OCI-LY7 (cell line): ENCODE measurements at regions of chr2 and their contacts with region 1.

Region 1: GRCh38 chr2:190069936-190070696 is 7.6 kb upstream of the MSTN start:
- DNase-seq: peak; percentile 74
- H3K4me3 ChIP-seq: no peak overlapping the region
- H3K27ac ChIP-seq: no peak overlapping the region
- H3K4me1 ChIP-seq: no peaks in the 10 kb centered on the region
- CTCF ChIP-seq: peak; percentile 85

Region 2: GRCh38 chr2:189661148-189661956 is 408.8 kb before region 1 on chr2 and contains the start of gene ASNSD1:
- CTCF ChIA-PET with region 1: interaction called, 4 read pairs
- POLR2A ChIA-PET with region 1: interaction called, 4 read pairs
- intact Hi-C with region 1: loop called (anchors 1 kb)
- DNase-seq: peak; percentile 100
- H3K4me3 ChIP-seq: peak within 1 kb of the TSS; percentile 90
- H3K27ac ChIP-seq: peak within 1 kb of the TSS; percentile 38
- H3K4me1 ChIP-seq: peaks cover 41% of the 10 kb centered on the region
- CTCF ChIP-seq: peak; percentile 99
- total RNA-seq, gene ASNSD1: 36.3 and 36.8 TPM in 2 replicates

Region 3: GRCh38 chr2:189751080-189751658 is 318.9 kb before region 1 on chr2:
- CTCF ChIA-PET with region 1: no interaction called
- POLR2A ChIA-PET with region 1: interaction called, 3 read pairs
- intact Hi-C with region 1: loop called (anchors 1 kb)
- DNase-seq: peak; percentile 64
- H3K4me3 ChIP-seq: no peak overlapping the region
- H3K27ac ChIP-seq: no peak overlapping the region
- H3K4me1 ChIP-seq: no peaks in the 10 kb centered on the region
- CTCF ChIP-seq: peak; percentile 83

Region 4: DNA sequence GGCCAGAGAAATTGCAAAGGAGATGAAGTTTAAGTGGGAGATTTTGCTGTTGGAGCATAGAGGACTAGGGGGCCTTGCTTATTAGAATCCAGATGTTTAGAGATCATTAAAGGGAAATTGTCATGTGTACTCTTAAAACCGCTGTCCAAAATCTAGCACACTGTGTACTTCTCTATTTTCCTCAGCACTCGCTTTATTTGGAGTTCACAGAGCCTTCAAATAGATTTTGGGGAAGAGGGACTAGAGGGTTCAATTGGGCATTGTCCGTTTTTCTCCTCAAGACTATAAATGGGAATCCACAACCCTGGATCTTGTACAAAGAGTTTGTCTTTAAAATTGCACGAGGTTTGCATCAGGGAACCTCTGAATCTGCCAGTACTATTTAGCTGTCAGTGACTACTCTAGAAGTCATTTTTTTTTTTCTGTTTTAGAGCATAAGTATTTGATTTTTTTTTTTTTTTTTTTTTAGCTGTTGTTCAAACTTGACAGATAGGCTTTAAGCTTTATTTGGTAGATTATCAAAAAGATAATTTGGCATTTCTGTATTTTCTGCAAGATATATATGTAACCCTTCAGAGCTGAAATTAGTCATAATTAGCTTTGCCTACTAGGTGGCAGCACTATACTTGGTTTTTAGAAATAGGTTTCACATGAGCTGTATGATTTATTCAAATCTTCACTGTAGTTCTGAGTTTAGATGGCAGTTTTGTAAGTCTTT is 271.6 kb before region 1 on chr2:
- CTCF ChIA-PET with region 1: interaction called, 3 read pairs
- POLR2A ChIA-PET with region 1: no interaction called
- intact Hi-C with region 1: loop called (anchors 1 kb)
- DNase-seq: peak; percentile 47
- H3K4me3 ChIP-seq: no peak overlapping the region
- H3K27ac ChIP-seq: no peak overlapping the region
- H3K4me1 ChIP-seq: peaks cover 4% of the 10 kb centered on the region
- CTCF ChIP-seq: peak; percentile 84

Region 5: DNA sequence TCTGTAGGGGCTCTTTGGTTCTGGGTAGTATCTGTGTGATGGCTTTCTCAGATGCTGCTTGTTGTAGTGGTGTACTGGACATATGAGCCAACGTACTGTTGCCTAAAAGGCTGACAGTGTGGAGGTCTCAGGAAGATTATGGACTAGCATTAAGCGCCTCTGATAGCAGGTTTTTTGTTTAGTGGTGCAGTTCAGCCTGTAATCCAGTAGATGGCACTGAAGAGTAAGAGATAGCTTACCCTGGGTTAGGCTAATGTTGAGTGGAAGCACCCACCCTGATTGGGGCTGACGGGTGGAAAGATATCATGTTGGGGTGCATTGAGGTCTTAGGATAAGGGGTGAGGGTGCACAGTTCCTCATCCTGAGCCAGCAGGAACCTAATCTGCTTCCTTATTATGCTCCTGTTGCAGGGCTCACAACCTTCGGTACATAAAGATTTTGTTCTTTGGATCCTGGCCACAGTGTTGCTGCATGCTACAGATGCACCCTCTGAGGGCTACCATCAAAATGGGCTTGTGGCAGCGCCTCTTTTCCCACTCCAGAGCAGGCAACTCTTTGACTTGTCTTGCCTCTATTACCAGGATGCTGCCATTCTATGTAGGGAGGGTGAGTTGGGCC is 87.2 kb before region 1 on chr2:
- CTCF ChIA-PET with region 1: no interaction called
- POLR2A ChIA-PET with region 1: no interaction called
- intact Hi-C with region 1: loop called (anchors 5 kb)
- DNase-seq: peak; percentile 40
- H3K4me3 ChIP-seq: no peak overlapping the region
- H3K27ac ChIP-seq: no peak overlapping the region
- H3K4me1 ChIP-seq: no peaks in the 10 kb centered on the region
- CTCF ChIP-seq: peak; percentile 78

Region 6: GRCh38 chr2:190053426-190053825 is 16.7 kb before region 1 on chr2:
- CTCF ChIA-PET with region 1: no interaction called
- POLR2A ChIA-PET with region 1: no interaction called
- intact Hi-C with region 1: no loop called
- DNase-seq: no peak
- H3K4me3 ChIP-seq: no peak overlapping the region
- H3K27ac ChIP-seq: no peak overlapping the region
- H3K4me1 ChIP-seq: no peaks in the 10 kb centered on the region
- CTCF ChIP-seq: no peak